BJ (cell line): ENCODE measurements at regions of chr19 and their contacts with region 1.

Region 1: GRCh38 chr19:28403690-28404089 is 809.3 kb downstream of the UQCRFS1 start:
- DNase-seq: no peak
- H3K4me3 ChIP-seq: no peak overlapping the region
- H3K27me3 ChIP-seq: no peaks in the 10 kb centered on the region; the same call in 1 of the 2 replicates
- CTCF ChIP-seq: no peak

Region 2: GRCh38 chr19:28386066-28386465 is 17.6 kb before region 1 on chr19:
- CTCF ChIA-PET with region 1: no interaction called
- POLR2A ChIA-PET with region 1: no interaction called
- DNase-seq: no peak
- H3K4me3 ChIP-seq: no peak overlapping the region
- H3K27me3 ChIP-seq: no peaks in the 10 kb centered on the region
- CTCF ChIP-seq: no peak

Region 3: DNA sequence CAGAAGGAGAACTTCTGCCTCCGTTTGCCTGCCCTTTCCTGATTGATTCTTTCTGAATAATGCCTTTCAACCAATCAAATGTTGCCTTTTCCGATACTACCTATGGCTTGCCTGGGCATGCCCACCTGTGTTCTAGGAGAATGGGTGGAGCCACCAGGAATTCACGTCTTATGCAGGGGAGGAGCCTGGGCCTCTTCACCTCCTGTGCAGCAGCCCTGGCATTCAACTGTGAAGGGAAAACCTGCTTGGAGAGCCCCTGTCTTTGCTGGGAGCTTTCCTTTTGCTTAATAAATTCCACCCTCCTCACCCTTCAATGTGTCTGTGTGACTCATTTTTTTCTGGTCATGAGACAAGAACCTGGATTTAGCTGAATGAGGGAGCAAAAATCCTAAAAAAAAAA is 78.5 kb after region 1 on chr19:
- CTCF ChIA-PET with region 1: no interaction called
- POLR2A ChIA-PET with region 1: interaction called, 12 read pairs
- DNase-seq: no peak
- H3K4me3 ChIP-seq: no peak overlapping the region
- H3K27me3 ChIP-seq: peaks cover 4% of the 10 kb centered on the region; the same call in 1 of the 2 replicates
- CTCF ChIP-seq: no peak